GM10248 (cell line): ENCODE measurements at regions of chr4 and their contacts with region 1.

Region 1: DNA sequence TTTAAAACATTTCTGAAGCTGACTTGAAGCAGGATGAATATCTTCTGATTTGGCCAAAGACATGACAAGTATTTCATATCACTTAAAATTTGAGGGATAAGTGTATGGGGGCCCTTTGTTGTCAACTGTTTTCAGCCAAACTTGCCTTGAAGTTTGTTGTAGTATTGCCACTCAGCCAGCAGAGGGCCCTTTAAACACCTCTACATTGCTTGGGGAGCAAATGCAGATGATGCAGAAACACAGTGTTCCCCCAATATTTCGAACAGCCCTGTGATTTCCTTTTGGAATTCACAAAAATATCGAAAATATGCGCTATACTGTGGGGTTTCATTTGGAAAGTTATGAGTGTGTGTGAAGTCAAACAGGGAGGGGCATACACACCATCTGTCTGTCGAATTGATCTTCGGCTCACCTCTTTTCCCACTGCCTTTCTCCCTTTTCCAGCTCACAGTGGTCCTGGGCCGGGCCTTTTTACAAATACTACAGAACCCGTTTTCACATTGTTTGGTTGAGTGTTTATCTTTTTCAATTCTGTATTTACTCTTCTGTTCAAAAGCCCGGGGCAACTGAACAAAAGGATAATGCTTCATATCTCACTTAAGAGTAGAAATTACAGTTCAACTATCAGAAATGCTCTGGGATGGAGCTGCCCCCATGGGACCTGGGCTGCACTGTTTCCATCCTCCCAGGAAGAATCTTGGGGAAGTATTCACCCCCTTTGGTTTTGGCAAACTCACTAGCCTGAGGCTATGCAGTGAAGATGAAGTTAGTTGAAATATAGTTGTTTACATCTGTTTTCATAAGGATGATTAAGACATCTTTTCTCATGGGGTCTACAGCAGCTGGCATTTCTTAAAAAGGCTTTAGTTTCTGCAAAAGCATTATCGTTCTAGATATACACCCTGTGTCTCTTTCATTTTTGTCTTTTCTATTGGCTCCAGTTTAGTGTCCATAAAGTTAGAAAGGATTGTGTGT is 137.6 kb downstream of the EGF start:
- DNase-seq: peak; percentile 47
- CTCF ChIP-seq: peak; percentile 78

Region 2: DNA sequence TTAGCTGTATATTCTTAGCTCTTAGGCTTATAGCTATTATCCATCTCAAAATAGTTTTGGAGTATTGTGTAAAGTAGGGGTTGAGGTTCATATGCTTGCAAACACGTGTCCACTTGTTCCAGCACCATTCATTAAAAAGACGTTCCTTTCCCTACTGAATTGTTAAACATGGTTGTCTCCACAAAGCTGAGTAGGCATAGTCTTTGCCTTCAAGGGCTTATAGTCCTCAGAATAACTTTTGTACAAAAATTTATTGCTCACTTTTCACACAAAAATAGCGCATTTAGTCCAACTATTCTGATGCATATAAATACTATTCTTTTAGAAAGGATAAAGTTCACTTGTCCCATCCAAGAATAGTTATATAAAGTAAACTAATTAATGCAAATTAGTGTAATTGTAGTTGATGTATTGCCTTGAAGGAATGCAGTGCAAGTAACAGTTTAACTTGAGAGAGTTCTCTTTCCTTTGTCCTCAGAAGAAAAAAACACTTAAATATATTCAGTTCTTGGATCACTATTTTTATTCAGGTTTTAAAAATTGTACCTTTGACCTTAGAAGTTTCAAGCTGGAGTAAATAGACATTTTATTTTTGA is 188.2 kb before region 1 on chr4:
- CTCF ChIA-PET with region 1: no interaction called
- POLR2A ChIA-PET with region 1: no interaction called
- DNase-seq: no peak
- CTCF ChIP-seq: no peak

Region 3: DNA sequence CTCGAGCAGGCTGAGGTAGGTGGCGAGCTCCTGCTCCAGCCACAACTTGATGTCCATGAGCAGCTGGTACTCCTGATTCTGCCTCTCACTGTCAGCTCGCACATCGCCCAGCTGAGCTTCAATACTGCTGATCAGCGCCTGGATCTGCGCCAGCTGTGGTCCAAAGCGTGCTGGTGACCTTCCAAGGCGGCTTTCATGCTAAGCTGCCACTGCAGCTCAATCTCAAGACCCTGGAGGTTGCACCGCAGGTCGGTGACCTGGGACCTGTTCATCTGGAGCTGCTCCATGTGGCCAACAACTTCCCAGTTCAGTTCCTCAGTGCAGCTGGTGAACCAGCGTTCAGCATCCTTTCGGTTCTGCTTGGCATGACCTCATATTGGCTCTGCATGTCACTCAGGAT is 171.1 kb before region 1 on chr4:
- CTCF ChIA-PET with region 1: no interaction called
- POLR2A ChIA-PET with region 1: no interaction called
- DNase-seq: no peak
- CTCF ChIP-seq: no peak

Region 4: GRCh38 chr4:110020139-110020538 is 30.1 kb before region 1 on chr4:
- CTCF ChIA-PET with region 1: interaction called, 15 read pairs
- POLR2A ChIA-PET with region 1: no interaction called
- DNase-seq: no peak
- CTCF ChIP-seq: no peak

Region 5: GRCh38 chr4:110196206-110196870 is 146.1 kb after region 1 on chr4:
- CTCF ChIA-PET with region 1: interaction called, 13 read pairs
- POLR2A ChIA-PET with region 1: interaction called, 4 read pairs
- DNase-seq: peak; percentile 53
- CTCF ChIP-seq: no peak

Region 6: DNA sequence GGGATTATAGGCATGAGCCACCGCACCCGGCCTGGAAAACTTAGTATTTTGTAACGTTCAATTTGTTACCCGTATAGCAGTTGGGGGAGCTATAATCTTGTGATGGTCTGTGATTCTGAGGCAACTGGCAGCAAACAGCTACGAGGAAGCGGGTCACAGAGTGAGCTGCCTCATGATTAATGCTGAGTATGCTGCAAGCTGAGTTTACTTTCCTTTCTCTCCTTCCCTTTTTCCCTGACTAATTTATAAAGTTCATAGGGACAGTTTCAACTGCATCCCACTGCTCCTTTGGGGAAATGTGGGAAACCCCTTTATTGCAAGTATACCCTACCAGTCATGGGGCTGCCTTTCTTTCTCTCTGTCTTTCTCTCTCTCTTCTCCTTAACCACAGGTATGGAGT is 165.9 kb after region 1 on chr4:
- CTCF ChIA-PET with region 1: interaction called, 16 read pairs
- POLR2A ChIA-PET with region 1: no interaction called
- DNase-seq: no peak
- CTCF ChIP-seq: no peak

Region 7: GRCh38 chr4:110452546-110452945 is 402.3 kb after region 1 on chr4:
- CTCF ChIA-PET with region 1: no interaction called
- POLR2A ChIA-PET with region 1: no interaction called
- DNase-seq: no peak
- CTCF ChIP-seq: no peak

Region 8: DNA sequence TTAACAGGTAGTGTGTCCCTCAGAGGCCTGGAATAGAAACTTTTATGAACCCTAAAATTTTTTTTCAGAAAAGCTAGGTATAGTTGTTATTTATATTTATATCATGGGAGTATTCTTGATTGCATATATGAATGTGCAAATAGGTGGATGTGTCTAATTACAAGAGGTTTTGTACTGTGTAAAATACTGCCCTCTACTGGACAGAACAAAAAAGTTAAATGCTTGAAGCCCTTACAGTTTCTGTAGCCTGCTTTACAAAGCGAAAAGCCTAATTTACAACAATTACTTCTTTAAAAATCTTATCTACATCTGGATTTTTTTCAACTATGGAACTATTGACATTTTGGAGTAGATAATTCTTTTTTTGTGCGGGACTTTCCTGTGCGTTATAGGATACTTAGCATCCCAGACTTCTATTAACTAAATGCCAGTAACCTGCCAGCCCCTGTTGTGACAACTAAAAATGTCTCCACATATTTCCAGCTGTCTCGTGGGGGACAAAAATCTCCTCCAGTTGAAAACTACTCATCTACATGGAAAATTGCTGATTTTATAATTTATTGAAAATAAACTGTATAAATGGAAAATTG is 460.8 kb after region 1 on chr4:
- CTCF ChIA-PET with region 1: interaction called, 60 read pairs
- POLR2A ChIA-PET with region 1: no interaction called
- DNase-seq: peak; percentile 51
- CTCF ChIP-seq: peak; percentile 50